ENCODE measurements at regions of chr2 and their contacts with region 1.

Region 1: GRCh38 chr2:175684457-175684856 is 317.6 kb downstream of the LNPK start:
- DNase-seq: no peak
- H3K4me3 ChIP-seq: no peak overlapping the region
- H3K27ac ChIP-seq: no peak overlapping the region
- H3K4me1 ChIP-seq: no peaks in the 10 kb centered on the region
- H3K27me3 ChIP-seq: peaks cover 0 to 11% of the 10 kb centered on the region in 2 donors
- CTCF ChIP-seq: no peak
- POLR2A ChIP-seq: no peak

Region 2: DNA sequence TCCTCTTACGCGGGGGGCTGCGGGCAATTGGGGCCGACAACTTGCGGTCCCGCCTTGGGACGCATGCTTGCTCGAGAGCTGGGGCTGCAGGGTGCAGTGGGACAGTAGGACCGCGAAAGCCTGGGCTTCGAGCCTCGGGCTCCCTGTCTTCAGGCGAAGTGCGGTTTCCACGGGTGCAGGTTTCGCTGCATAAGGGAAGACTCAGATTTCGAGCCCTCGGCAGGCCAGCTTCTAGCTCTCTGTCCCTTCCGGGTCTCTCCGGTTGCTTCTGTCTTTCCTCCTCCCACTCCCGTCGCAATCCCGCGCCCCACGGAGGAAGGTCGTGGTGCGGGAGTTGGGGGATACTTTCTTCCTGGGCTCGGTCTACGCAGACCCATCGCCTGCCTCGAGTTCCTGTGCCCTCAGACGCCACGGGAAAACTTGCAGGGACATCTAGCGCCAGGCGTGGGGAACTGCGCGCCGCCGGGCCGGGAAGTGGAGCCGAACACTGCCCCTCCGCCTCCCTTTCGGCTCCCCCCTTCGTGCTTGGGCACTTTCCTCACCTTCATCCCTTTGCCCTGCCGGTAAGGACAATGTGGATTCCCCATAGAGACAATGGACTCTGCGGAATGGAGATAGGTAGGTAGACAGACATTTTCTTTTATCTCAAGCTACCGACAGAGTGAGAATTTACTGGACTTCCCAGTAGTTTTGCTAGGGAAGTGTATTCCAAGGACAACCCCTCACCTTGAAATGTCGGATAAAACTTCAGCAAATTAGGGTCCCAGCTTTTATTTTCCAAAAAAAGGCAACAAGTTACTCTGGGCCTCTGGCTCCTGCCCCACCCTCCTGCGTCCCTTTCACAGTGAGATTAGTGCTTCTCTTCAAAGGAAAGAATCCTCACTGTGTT is 403.8 kb after region 1 on chr2:
- intact Hi-C with region 1: loop called (anchors 10 kb)
- DNase-seq: peak in 1 of 2 donors; percentile 51
- H3K4me3 ChIP-seq: no peak overlapping the region
- H3K27ac ChIP-seq: no peak overlapping the region
- H3K4me1 ChIP-seq: peaks cover 0 to 10% of the 10 kb centered on the region in 2 donors
- H3K27me3 ChIP-seq: peaks cover 55 to 87% of the 10 kb centered on the region in 2 donors
- CTCF ChIP-seq: peak; percentile 54 to 79 (median 58)
- POLR2A ChIP-seq: no peak

Measured in uterus (tissue), 4 donors.